Activated T-helper 1 cell treated with anti-CD3 and anti-CD28 coated beads, Interleukin-12 subunit alpha, Interleukin-12 subunit beta, Interleukin-2, Interleukin-4 antibody, amounts not matched to agents 30 ng/mL and 10 ng/mL and 1 ng/mL, durations not matched to agents 14 hours and 24 hours and 36 hours (primary cell): ENCODE measurements at regions of chr18 and their contacts with region 1.

Region 1: DNA sequence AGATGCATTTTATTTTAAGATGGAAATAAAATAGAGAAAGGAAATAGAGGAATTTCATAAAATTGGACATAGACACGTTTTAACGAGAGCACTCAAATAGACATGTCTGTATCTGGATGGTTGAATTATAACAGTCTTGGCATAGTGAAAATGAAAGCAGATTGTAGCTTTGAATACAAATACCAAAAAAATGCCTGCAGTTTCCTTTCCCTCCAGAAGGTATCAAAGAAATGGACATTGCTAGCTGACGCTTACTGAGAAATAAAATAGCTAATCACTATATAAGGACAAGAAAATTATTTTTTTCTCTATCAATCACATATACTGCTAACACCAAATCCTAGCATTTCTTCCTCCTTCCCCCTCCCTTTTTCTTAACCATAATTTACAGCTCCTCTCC is 11.4 kb upstream of the MAPRE2 start:
- DNase-seq: no peak
- H3K4me3 Mint-ChIP-seq: peak overlapping the region; percentile 77
- H3K27ac Mint-ChIP-seq: peak overlapping the region; percentile 95
- H3K4me1 Mint-ChIP-seq: peaks cover 42% of the 10 kb centered on the region
- H3K27me3 Mint-ChIP-seq: no peaks in the 10 kb centered on the region

Region 2: GRCh38 chr18:34818064-34818463 is 211.7 kb before region 1 on chr18:
- intact Hi-C with region 1: no loop called
- DNase-seq: no peak
- H3K4me3 Mint-ChIP-seq: no peak overlapping the region
- H3K27ac Mint-ChIP-seq: no peak overlapping the region
- H3K4me1 Mint-ChIP-seq: no peaks in the 10 kb centered on the region
- H3K27me3 Mint-ChIP-seq: peaks cover 7% of the 10 kb centered on the region

Region 3: DNA sequence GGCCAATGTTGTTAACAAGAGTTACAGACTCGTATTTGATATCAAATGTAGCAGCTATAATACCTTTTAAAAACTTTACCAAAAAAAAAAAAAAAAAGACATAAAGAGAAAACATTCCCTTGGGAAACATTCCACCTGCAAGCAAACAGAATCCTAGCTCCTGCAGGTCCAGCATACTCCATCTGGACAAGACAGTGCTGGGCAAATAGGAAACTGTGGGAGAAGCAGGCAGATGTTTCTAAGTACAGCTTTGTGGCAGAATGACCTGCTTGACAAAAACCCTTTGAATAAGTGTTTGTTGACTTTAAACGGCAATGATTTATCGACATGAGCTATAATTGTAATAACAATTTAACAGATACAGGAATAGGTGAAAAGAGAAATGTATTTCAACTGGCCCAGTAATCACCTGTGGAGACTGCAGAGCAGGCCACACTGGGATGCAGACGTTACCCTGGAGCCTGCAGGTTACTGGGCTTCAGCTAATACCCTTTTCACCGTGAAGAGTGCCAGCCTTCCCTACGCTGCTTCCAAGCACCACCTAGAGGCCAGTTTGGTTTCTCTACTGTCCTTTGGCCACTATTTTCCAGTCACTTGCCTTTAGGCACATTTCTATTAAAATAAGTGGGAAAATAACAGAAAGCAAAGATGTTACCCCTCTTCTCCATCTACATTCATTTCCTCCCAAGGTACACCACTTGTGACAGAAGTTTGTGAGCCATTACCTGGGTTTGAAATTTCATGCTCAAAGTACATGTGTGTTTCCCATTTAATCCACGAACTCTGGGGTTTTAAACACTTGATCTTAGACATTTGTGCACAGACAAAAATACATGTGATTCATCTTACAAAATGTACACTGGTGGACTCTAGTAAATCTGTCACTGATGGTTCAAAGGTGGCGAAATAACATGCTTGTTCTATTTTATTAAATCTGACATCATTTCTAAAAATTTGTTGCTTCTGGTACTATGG is 114.1 kb after region 1 on chr18:
- intact Hi-C with region 1: loop called (anchors 1 kb)
- DNase-seq: no peak
- H3K4me3 Mint-ChIP-seq: no peak overlapping the region
- H3K27ac Mint-ChIP-seq: no peak overlapping the region
- H3K4me1 Mint-ChIP-seq: peaks cover 3% of the 10 kb centered on the region
- H3K27me3 Mint-ChIP-seq: no peaks in the 10 kb centered on the region

Region 4: GRCh38 chr18:35355140-35355618 is 325.4 kb after region 1 on chr18:
- intact Hi-C with region 1: loop called (anchors 5 kb)
- DNase-seq: peak; percentile 26
- H3K4me3 Mint-ChIP-seq: no peak overlapping the region
- H3K27ac Mint-ChIP-seq: no peak overlapping the region
- H3K4me1 Mint-ChIP-seq: peaks cover 4% of the 10 kb centered on the region
- H3K27me3 Mint-ChIP-seq: no peaks in the 10 kb centered on the region